Lower leg skin (tissue), 4 donors: ENCODE measurements at regions of chr10 and their contacts with region 1.

Region 1: GRCh38 chr10:86730227-86730626 is 26.2 kb upstream of the BMPR1A start:
- DNase-seq: no peak
- H3K4me3 ChIP-seq: no peak overlapping the region
- CTCF ChIP-seq: no peak
- POLR2A ChIP-seq: no peak

Region 2: DNA sequence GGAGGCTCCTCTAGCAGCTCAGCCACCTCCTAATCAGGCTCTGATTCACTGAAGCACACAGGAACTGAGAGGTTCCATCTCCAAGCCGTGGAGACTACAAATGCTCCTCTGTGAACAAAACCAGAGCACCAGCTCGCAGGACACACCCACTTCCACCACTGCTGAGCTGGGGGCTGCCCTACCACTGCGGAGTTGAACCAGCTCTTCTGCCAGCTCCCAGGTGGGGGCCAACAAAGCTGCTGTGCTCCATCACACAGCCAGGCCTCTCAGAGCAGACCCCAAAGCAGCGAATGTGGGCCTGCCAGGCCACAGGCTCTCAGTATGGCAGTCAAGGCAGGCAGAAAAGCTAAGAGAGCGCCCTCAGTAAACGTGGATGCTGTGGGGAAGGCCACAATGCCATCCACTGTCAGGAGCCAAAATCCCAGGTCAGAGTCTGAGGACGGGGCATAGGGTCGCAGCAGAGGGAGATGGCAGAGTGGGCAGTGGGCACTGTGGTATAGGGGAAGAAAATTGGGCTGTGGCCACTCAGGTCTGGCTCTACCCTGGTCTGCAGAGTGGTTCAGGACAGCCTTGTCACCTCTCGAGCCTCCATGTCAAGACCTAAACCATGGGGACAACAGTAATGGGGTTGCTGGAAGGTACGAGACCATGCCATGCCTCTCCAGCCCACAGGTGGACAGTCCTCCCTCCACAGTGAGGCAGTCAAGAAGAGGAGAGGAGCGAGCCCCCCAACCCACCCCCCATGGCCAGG is 445.7 kb before region 1 on chr10:
- intact Hi-C with region 1: loop called (anchors 5 kb)
- DNase-seq: peak in 1 of 2 donors; percentile 49
- H3K4me3 ChIP-seq: no peak overlapping the region
- CTCF ChIP-seq: no peak
- POLR2A ChIP-seq: no peak

Region 3: GRCh38 chr10:86744067-86744725 is 14.0 kb after region 1 on chr10:
- intact Hi-C with region 1: no loop called
- DNase-seq: no peak
- H3K4me3 ChIP-seq: no peak overlapping the region
- CTCF ChIP-seq: no peak
- POLR2A ChIP-seq: no peak

Region 4: DNA sequence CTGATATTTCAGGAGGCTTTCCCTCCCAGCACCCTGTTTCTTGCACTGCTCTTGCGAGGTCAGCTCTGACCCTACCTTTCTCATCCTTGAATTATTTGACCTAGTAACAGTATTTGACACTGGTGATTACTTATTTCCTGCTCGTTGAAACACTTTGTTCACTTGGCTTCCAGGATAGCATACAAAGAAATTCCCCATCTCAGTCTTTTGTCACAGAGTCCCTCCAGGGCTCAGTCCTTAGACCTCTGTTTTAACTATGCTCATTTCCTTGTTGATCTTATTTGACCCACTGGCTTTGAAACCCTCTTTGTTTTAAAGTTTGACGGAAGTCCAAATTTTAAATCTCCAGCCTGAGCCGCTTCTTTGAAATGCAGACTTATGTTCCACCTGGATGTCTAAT is 56.1 kb after region 1 on chr10:
- intact Hi-C with region 1: no loop called
- DNase-seq: no peak
- H3K4me3 ChIP-seq: no peak overlapping the region
- CTCF ChIP-seq: no peak
- POLR2A ChIP-seq: no peak